GM12878 (cell line): ENCODE measurements at regions of chr12 and their contacts with region 1.

Region 1: GRCh38 chr12:113086249-113087164 is 30.0 kb downstream of the DTX1 start:
- DNase-seq: peak; percentile 62
- ATAC-seq: peak; percentile 55
- H3K4me3 ChIP-seq: peak overlapping the region; percentile 2; the same call in 1 of the 2 replicates
- H3K27ac ChIP-seq: peak overlapping the region; percentile 80
- H3K4me1 ChIP-seq: peaks cover 67% of the 10 kb centered on the region
- H3K27me3 ChIP-seq: no peaks in the 10 kb centered on the region
- CTCF ChIP-seq: no peak
- EP300 ChIP-seq: 0 out of 4 replicates have a peak, but pooled peaks of 1 of the 2 experiments have one; percentile 38
- POLR2A ChIP-seq: no peak
- RAD21 ChIP-seq: no peak

Region 2: DNA sequence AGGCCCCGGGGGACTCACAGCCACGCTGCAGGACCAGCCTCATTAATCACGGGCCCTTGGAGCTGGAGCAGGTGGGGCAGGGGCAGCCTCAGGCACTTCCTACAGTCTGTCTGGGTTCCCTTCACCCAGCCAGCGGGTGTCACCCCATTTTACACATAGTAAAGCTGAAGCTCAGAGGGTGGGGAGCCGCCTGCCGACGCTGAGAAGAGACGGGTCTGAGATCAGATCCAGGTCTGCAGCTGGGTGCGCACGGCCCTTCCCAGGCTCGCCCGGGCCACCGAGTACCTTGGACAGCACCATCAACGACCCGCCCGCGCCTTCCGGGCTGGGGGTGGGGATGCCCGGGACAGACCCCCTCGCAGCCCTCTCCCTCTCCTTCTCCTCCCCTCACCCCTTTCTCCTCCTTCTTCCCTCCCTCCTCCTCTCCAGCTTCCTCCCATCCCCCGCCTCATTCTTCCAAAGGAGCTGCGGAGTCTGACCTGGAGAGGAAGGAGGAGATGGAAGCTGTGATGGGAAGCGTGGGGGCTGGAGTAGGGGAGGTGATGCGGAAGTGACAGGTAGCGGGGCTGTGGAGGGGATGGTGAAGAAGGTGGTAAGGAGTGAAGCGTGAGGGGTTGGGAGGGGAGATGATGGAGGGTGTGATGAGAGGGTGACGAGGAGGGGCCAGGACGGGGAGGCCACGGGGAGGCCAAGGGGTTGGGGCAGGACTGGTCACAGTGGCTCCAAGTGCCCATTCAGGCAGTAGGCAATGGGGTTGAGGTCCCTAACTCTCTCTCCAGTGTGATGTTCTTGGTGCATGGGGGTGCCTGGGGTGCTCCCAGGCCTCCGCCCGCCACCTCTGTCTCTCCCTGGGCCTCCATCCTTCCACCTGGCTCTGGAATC is 21.1 kb before region 1 on chr12:
- CTCF ChIA-PET with region 1: interaction called, 98 read pairs
- POLR2A ChIA-PET with region 1: interaction called, 41 read pairs
- RAD21 ChIA-PET with region 1: interaction called, 39 read pairs
- SMC1A ChIA-PET with region 1: interaction called, 416 read pairs
- in situ Hi-C with region 1: no loop called
- intact Hi-C with region 1: no loop called
- DNase-seq: no peak
- ATAC-seq: peak; percentile 5; the same call in 2 of the 3 replicates
- H3K4me3 ChIP-seq: no peak overlapping the region
- H3K27ac ChIP-seq: no peak overlapping the region
- H3K4me1 ChIP-seq: peaks cover 39% of the 10 kb centered on the region
- H3K27me3 ChIP-seq: peaks cover 0 to 4% of the 10 kb centered on the region in 2 experiments; a peak in 1 of 4 replicates
- CTCF ChIP-seq: no peak
- EP300 ChIP-seq: no peak
- POLR2A ChIP-seq: no peak
- RAD21 ChIP-seq: no peak